OCI-LY7 (cell line): ENCODE measurements at regions of chr3 and their contacts with region 1.

Region 1: GRCh38 chr3:33456756-33457155 is 16.6 kb upstream of the UBP1 start:
- DNase-seq: no peak
- H3K4me3 ChIP-seq: no peak overlapping the region
- H3K27ac ChIP-seq: no peak overlapping the region
- H3K4me1 ChIP-seq: no peaks in the 10 kb centered on the region
- CTCF ChIP-seq: no peak

Region 2: GRCh38 chr3:33496449-33496848 is 39.7 kb after region 1 on chr3:
- CTCF ChIA-PET with region 1: no interaction called
- POLR2A ChIA-PET with region 1: interaction called, 7 read pairs
- intact Hi-C with region 1: loop called (anchors 2 kb)
- DNase-seq: no peak
- H3K4me3 ChIP-seq: no peak overlapping the region
- H3K27ac ChIP-seq: no peak overlapping the region
- H3K4me1 ChIP-seq: no peaks in the 10 kb centered on the region
- CTCF ChIP-seq: no peak